CD8-positive, alpha-beta T cell (primary cell): ENCODE measurements at regions of chr1 and their contacts with region 1.

Region 1: DNA sequence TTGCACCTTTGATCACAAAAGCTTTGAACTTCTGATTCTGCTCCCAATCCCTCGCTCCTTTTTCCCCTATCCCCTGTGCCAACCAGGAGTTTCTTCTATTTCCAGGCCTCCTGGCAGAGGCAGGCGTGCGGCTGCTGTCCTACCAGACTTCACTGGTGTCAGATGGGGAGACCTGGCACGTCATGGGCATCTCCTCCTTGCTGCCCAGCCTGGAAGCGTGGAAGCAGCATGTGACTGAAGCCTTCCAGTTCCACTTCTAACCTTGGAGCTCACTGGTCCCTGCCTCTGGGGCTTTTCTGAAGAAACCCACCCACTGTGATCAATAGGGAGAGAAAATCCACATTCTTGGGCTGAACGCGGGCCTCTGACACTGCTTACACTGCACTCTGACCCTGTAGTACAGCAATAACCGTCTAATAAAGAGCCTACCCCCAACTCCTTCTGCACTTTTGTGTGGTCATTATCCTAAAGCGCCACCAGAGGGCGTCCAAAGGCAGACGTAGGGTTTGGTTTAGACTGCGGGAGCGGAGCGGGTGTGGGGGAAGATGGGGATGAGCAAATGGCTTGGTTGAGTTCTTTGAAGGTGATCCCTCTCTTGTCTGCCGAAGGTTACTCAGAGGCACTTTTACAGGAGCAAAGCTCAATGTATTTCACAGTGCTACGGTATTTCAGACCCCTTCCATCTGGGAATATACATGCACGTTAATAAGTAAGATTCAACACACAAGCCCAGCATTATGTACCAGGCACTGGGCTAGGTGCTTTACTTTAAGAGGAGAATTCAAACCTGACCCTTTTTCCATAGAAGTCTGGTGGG is 24.7 kb downstream of the HMGCS2 start:
- DNase-seq: peak in 7 of 9 experiments; percentile 34 to 71 (median 48)
- ATAC-seq: peak; percentile 78
- H3K4me3 ChIP-seq: no peak overlapping the region
- H3K4me3 Mint-ChIP-seq: no peak overlapping the region
- H3K27ac ChIP-seq: no peak overlapping the region
- H3K27ac Mint-ChIP-seq: no peak overlapping the region
- H3K4me1 ChIP-seq: no peaks in the 10 kb centered on the region
- H3K4me1 Mint-ChIP-seq: peaks cover 5% of the 10 kb centered on the region
- H3K27me3 ChIP-seq: no peaks in the 10 kb centered on the region
- H3K27me3 Mint-ChIP-seq: no peaks in the 10 kb centered on the region
- CTCF ChIP-seq: peak; percentile 75

Region 2: DNA sequence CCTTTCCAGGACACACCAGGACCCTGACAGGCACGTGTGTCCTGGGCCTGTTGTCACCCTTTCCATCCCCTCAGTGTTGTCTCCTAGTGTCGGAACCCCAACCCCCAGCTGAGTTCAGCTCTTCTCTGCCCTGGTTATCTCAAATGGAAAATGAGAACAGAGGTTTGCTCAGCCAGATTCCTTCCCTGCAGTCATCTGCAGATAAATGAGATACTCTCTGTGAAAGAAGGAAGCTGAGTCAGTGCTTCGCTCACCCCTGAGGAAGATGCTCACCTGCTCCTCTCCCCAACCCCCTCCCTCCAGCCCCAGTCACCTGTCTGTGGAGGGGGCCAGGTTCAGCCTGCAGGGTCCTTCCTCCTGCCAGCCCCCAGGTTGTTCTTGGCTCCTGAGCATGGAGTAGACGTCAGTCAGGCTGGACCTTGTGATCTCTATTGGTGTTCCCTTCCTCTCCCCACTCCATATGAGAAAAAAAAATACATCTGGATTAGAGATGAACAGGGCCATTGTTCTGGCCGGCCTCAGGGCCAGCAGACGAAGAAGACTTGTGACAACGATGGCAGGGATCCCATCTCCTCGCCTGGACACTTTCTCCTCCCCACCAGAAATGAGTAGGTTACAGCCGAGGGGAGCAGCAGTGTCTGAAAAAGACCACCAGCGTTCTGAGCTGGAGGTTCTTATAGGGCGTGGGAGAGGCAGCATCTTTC is 11.4 kb before region 1 on chr1:
- CTCF ChIA-PET with region 1: interaction called, 28 read pairs
- POLR2A ChIA-PET with region 1: no interaction called
- intact Hi-C with region 1: no loop called
- DNase-seq: no peak
- ATAC-seq: no peak
- H3K4me3 ChIP-seq: no peak overlapping the region
- H3K4me3 Mint-ChIP-seq: no peak overlapping the region
- H3K27ac ChIP-seq: no peak overlapping the region
- H3K27ac Mint-ChIP-seq: no peak overlapping the region
- H3K4me1 ChIP-seq: no peaks in the 10 kb centered on the region
- H3K4me1 Mint-ChIP-seq: no peaks in the 10 kb centered on the region
- H3K27me3 ChIP-seq: no peaks in the 10 kb centered on the region
- H3K27me3 Mint-ChIP-seq: no peaks in the 10 kb centered on the region
- CTCF ChIP-seq: no peak

Region 3: GRCh38 chr1:119808972-119809550 is 65.1 kb after region 1 on chr1:
- CTCF ChIA-PET with region 1: interaction called, 7 read pairs
- POLR2A ChIA-PET with region 1: no interaction called
- intact Hi-C with region 1: loop called in 1 of 2 experiments (anchors 2 kb)
- DNase-seq: peak; percentile 22 to 80 (median 69)
- ATAC-seq: peak; percentile 88
- H3K4me3 ChIP-seq: no peak overlapping the region
- H3K4me3 Mint-ChIP-seq: no peak overlapping the region
- H3K27ac ChIP-seq: no peak overlapping the region
- H3K27ac Mint-ChIP-seq: no peak overlapping the region
- H3K4me1 ChIP-seq: no peaks in the 10 kb centered on the region
- H3K4me1 Mint-ChIP-seq: peaks cover 3% of the 10 kb centered on the region
- H3K27me3 ChIP-seq: no peaks in the 10 kb centered on the region
- H3K27me3 Mint-ChIP-seq: peaks cover 10% of the 10 kb centered on the region
- CTCF ChIP-seq: peak; percentile 96

Region 4: DNA sequence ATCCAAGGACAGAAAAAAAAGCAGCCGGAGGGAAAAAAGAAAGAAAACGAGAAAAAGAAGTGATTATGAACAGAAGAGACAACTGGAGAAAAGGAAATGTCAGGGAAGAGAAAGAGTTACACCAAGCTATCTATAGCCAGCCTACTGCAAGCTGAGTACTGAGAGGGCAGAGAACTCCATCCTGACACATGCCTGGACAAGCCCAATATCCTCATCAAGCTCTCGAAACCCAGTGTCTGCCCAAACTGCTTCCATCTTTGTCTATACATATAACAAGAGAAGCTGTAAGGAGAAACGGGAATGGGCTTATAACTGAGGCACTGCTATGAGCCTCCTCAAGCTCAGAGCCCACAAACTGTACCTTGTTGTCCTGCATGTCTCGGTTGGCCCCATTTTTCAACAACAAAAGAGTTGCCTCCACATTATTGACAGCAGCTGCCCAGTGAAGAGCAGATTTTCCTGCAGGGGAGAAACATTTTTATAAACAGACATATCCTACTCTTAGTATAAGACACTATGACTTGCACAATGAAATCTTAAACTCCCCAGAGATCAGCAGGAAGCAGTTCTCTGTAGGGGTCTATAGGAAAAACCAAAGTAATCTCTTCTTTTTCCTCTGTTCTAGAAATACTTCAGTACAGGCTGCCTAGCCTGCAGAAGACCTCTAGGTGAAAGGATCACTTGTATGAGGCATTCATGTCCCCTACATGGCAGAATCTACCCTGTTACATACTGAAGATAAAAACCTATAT is 173.5 kb after region 1 on chr1:
- CTCF ChIA-PET with region 1: no interaction called
- POLR2A ChIA-PET with region 1: no interaction called
- intact Hi-C with region 1: no loop called
- DNase-seq: no peak
- ATAC-seq: no peak
- H3K4me3 ChIP-seq: no peak overlapping the region
- H3K4me3 Mint-ChIP-seq: no peak overlapping the region
- H3K27ac ChIP-seq: no peak overlapping the region
- H3K27ac Mint-ChIP-seq: peak overlapping the region; percentile 2
- H3K4me1 ChIP-seq: no peaks in the 10 kb centered on the region
- H3K4me1 Mint-ChIP-seq: no peaks in the 10 kb centered on the region
- H3K27me3 ChIP-seq: no peaks in the 10 kb centered on the region
- H3K27me3 Mint-ChIP-seq: no peaks in the 10 kb centered on the region
- CTCF ChIP-seq: no peak

Region 5: DNA sequence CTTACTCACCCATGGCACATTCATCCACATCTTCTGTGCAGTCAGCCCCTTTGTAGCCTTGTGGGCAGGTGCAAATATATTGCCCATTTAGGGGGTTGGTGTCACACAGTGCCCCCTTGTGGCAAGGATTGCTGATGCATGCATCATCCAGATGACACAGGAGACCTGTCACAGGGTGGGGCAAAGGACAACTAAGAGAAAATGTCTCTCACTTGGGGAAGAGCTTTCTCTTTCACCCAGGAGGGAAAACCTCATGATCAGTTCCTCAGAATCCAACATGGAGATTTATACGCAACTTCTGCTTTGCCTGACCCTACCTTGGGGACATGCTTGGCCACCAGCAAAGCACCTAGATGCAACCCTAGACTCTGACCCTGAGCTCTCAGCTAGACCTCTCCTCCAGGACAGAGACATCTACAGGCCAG is 224.1 kb after region 1 on chr1:
- CTCF ChIA-PET with region 1: no interaction called
- POLR2A ChIA-PET with region 1: no interaction called
- intact Hi-C with region 1: loop called (anchors 2 to 5 kb)
- DNase-seq: peak; percentile 49 to 81 (median 76)
- ATAC-seq: peak; percentile 99
- H3K4me3 ChIP-seq: no peak overlapping the region
- H3K4me3 Mint-ChIP-seq: no peak overlapping the region
- H3K27ac ChIP-seq: no peak overlapping the region
- H3K27ac Mint-ChIP-seq: peak overlapping the region; percentile 76
- H3K4me1 ChIP-seq: no peaks in the 10 kb centered on the region
- H3K4me1 Mint-ChIP-seq: peaks cover 4% of the 10 kb centered on the region
- H3K27me3 ChIP-seq: no peaks in the 10 kb centered on the region
- H3K27me3 Mint-ChIP-seq: no peaks in the 10 kb centered on the region
- CTCF ChIP-seq: peak; percentile 81